AG04450 (cell line): ENCODE measurements at regions of chr5 and their contacts with region 1.

Region 1: DNA sequence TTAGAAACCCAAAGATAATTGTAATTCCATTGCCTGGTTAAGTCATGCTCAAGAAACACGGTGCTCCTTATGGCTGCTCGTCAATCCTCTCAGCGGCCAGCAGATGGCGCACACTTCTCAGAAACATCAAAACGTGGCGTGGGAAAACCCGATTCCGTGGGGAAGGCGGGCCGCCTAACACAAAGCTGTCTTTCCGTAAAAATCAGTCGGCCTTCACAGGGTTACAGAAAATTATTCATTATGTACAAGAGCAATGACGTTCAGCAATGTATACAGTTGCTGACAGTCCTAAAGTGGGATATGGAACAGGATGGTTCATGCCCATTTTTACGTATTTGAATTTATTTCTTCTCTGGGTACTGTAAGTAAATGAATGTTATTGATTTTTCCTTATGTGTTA is 83.5 kb downstream of the PDE4D start:
- DNase-seq: peak; percentile 55
- H3K4me3 ChIP-seq: 0 out of 2 replicates have a peak overlapping the region, but pooled peaks have one; percentile 7
- H3K27ac ChIP-seq: no peak overlapping the region
- H3K27me3 ChIP-seq: no peaks in the 10 kb centered on the region
- CTCF ChIP-seq: peak; percentile 93

Region 2: DNA sequence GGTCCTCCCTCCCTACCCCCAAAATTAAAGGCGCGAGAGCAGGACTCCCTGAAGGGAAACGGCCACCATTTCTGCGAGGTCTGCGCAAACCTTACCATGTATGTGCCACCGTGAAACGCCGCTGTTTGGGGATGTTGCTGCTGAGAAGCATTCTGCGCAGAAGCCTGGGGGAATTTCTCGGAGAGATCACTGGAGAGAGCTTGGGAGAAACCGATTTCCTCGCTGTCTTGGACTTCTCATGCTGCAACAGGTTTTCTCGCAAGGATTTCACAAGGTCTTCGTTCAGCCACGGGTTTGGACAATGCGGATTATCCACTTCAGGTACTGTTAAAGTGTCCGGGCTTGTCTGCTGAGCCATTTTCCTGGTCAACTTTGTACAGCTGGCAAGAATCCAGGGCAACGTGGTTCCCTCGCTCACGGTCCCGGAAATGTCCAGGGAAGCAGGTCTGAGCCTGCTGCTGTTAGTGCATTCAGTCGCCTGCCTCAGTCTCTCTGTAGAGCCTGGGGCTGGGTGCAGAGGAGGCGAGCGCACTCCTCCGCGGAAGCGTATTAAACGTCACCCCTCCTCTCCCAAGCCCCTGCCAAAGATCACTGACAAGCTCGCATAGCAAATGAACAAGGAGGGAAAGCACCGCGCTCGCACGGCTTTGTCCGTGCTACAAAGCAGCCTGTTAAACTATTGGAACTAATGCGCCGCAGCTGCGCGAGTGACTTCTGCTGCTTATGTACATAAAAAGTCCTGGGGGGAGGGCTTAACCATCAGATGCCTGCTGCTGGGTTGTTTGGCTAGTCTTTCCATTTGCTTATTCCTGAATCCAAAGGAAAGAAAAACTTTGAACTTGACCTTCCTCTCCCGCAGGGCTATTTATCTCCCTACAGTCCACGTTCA is 41.6 kb before region 1 on chr5:
- CTCF ChIA-PET with region 1: no interaction called
- POLR2A ChIA-PET with region 1: no interaction called
- DNase-seq: no peak
- H3K4me3 ChIP-seq: peak overlapping the region; percentile 61
- H3K27ac ChIP-seq: no peak overlapping the region
- H3K27me3 ChIP-seq: peaks cover 15% of the 10 kb centered on the region
- CTCF ChIP-seq: no peak

Region 3: DNA sequence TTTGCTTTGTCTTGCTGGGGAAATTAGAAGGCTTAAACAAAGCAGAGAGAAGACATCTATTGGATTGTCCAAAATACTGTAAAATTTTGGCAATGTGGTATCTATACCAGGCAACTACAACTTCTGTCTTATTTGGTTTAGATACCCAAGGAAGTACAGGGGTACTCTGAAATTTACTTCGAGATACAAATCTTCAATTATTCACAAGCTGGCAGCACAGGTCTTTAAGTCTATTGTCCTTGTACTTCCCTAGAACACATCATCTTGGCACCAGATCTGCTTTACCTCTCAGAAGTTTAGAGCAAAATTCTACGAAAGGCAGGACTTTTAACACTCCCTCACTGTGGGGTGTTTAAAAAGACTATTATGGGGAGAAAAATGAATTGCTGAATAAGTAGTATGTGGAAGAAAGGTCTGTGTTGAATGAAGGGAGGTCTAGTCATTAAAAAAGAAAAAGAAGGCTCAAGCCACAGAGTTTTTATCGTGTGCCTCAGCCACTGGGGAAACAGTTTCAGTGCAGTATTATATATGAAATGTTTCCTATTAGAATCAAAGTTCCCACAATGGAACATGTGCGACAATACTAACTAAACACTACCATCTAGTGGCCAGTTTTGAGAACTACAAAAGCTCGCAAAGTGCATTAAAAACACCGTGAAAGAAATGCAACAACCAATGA is 10.2 kb before region 1 on chr5:
- CTCF ChIA-PET with region 1: interaction called, 27 read pairs
- POLR2A ChIA-PET with region 1: no interaction called
- DNase-seq: no peak
- H3K4me3 ChIP-seq: no peak overlapping the region
- H3K27ac ChIP-seq: no peak overlapping the region
- H3K27me3 ChIP-seq: no peaks in the 10 kb centered on the region
- CTCF ChIP-seq: peak; percentile 72

Region 4: DNA sequence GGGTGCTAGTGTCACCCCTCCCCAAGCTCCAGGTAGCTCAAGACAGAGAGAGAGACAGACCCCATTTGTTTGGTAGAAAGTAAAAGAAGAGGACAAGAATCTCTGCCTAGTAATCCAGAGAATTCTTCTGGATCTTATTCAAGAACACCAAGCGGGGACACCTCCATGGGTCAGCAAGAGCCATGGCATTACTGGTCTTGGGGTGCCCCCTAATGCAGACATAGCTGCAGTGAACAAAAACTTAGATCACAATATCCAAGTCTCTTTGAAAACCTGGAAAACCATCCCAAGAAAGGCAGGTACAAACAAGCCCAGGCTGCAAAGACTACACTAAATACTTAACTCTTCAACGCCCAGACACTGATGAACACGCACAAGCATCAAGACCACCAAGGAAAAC is 113.4 kb after region 1 on chr5:
- CTCF ChIA-PET with region 1: interaction called, 49 read pairs
- POLR2A ChIA-PET with region 1: no interaction called
- DNase-seq: no peak
- H3K4me3 ChIP-seq: no peak overlapping the region
- H3K27ac ChIP-seq: no peak overlapping the region
- H3K27me3 ChIP-seq: no peaks in the 10 kb centered on the region
- CTCF ChIP-seq: peak; percentile 46

Region 5: GRCh38 chr5:59972043-59972442 is 162.0 kb after region 1 on chr5:
- CTCF ChIA-PET with region 1: no interaction called
- POLR2A ChIA-PET with region 1: no interaction called
- DNase-seq: no peak
- H3K4me3 ChIP-seq: no peak overlapping the region
- H3K27ac ChIP-seq: no peak overlapping the region
- H3K27me3 ChIP-seq: no peaks in the 10 kb centered on the region
- CTCF ChIP-seq: no peak

Region 6: DNA sequence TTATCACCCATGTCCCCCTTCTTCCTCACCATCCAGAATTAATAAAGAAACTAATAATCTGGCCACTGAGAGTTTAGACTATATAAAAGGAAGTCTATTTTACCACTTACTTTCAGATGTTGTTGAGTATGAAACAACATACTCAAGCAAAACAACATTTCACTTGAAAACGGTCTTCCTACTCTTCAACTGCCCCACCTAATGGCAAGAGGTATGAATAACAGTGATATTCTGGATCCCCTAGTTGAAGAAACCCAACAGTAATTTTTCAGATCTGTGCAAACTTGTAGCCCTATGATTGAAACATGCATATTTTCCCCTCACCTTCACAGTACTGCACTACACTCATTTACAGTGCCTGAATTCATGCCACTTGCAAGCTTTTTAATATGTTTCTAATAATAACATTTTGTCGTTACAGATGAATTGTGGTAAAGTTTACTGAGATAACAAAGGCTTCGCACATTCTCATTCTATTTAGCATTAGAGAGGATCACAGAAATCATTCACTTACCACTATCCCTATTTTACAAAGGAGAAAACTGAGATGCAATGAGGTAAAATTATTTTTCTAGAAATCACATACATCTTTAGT is 351.4 kb after region 1 on chr5:
- CTCF ChIA-PET with region 1: interaction called, 27 read pairs
- POLR2A ChIA-PET with region 1: no interaction called
- DNase-seq: no peak
- H3K4me3 ChIP-seq: no peak overlapping the region
- H3K27ac ChIP-seq: no peak overlapping the region
- H3K27me3 ChIP-seq: no peaks in the 10 kb centered on the region
- CTCF ChIP-seq: peak; percentile 61

Region 7: GRCh38 chr5:60382716-60383115 is 572.7 kb after region 1 on chr5:
- CTCF ChIA-PET with region 1: interaction called, 12 read pairs
- POLR2A ChIA-PET with region 1: no interaction called
- DNase-seq: no peak
- H3K4me3 ChIP-seq: no peak overlapping the region
- H3K27ac ChIP-seq: no peak overlapping the region
- H3K27me3 ChIP-seq: no peaks in the 10 kb centered on the region
- CTCF ChIP-seq: peak; percentile 28